ENCODE measurements at regions of chr1 and their contacts with region 1.

Region 1: DNA sequence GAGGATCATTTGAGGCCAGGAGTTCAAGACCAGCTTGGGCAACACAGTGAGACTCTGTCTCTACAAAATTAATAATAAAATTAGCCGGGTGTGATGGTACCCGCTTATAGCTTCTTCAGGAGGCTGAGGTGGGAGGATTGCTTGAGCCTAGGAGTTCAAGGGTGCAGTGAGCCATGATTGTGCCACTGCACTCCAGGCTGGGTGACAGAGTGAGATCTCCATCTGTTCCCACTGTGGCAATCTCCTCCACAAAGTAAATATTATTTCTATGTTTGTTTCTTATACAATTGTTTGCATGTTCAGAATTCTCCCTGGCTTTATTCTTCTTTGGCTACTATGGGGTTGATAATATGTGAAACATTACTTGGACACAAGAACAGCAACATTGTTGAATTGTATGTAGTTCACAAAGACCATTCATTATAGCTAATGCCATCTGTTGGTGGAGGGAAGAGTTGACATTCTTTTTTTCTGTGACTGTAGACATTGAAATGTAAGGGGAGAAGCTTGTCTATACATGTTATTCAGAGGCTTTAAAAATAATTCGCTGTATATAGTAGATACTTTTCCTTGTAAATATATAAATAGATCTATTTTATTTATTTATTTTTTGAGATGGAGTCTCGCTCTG is 47.8 kb upstream of the SRSF10 start:
- DNase-seq: no peak
- ATAC-seq: peak; percentile 80
- H3K4me3 ChIP-seq: no peak overlapping the region
- H3K27ac ChIP-seq: no peak overlapping the region
- H3K4me1 ChIP-seq: no peaks in the 10 kb centered on the region
- H3K27me3 ChIP-seq: no peaks in the 10 kb centered on the region

Region 2: DNA sequence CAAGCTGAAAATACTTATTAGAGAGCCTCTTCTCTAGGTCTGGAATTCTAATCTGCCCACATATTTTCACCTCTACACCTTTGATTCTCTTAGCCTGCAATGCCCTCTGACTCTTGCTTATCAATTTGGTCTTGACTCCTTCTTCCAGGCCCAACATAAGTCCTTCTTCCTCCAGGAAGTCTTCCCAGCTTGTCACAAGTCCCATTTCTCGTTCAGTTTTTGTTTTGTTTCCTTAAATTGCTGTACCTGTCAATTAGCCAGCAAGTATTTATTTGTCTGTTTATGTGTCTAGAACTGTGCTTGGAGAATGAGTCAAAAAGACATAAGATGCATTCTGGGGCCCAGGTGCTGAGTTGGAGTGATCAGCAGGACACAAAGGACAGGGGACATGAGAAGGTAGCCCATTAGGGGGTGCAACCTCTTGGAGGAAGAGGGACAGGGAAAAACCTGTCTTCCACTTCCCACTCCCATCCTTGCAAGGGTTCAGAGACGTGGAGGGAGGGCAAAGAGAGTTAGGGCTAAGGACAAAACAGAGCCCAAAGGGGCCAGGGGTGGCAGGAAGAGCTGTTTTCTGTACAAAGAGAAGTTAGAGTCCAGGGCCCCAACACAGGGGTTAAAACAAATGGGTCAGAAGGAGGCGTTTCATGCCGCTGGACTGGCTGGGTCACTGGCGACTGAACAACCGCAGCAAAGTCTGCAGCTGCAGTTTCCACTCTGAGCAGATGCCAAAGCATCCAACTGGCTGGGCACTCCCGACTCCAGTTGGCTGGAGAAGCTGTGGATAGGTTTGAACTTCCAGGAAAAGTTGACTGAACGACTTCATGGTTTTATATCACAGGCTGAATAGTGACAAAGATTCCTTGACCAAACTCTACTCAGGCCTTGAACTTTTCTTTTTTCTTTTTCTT is 104.1 kb before region 1 on chr1:
- intact Hi-C with region 1: loop called in 1 of 2 experiments (anchors 5 kb)
- DNase-seq: peak; percentile 78 to 80
- ATAC-seq: peak; percentile 54
- H3K4me3 ChIP-seq: no peak overlapping the region
- H3K27ac ChIP-seq: peak overlapping the region; percentile 9 to 14
- H3K4me1 ChIP-seq: no peaks in the 10 kb centered on the region
- H3K27me3 ChIP-seq: no peaks in the 10 kb centered on the region

Region 3: GRCh38 chr1:23959041-23959460 is 68.9 kb before region 1 on chr1:
- intact Hi-C with region 1: loop called in 1 of 2 experiments (anchors 5 kb)
- DNase-seq: peak; percentile 92 to 93
- ATAC-seq: peak; percentile 84
- H3K4me3 ChIP-seq: peak overlapping the region; percentile 35 to 45
- H3K27ac ChIP-seq: peak overlapping the region; percentile 39 to 92
- H3K4me1 ChIP-seq: no peaks in the 10 kb centered on the region
- H3K27me3 ChIP-seq: no peaks in the 10 kb centered on the region

Region 4: DNA sequence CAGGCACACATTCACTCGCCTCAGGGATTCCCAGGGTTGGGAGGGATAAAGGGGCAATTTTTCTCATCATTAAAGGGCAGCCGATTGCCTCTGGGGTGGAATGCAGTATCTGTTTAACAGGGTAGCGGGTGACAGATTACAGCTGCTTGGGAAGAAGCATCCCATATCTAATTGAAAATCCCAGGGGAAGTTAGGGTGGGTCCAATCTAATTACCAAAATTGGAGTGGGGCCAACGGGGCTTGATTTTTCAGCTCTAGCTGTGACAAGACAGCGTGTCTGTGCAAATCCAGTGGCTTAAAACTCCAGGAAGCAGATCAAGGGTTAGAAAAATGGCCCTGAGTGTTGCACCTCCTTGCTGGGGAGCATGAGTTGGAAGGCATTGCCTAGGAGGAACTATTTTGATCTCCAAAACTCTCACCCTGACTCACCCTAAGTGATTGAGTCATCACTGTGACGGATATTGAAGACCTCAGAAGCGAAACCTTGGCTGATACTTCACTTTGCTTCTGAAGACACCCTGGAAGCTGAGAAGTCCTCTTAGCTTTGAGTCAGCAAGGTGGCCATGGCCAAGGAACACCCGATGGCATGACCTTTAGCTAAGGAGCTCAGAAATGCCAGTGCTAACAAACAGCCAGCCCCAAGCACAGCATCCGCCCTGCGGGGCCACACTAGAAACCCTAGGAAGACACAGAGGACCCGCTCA is 337.2 kb after region 1 on chr1:
- intact Hi-C with region 1: no loop called
- DNase-seq: no peak
- ATAC-seq: no peak
- H3K4me3 ChIP-seq: no peak overlapping the region
- H3K27ac ChIP-seq: no peak overlapping the region
- H3K4me1 ChIP-seq: no peaks in the 10 kb centered on the region
- H3K27me3 ChIP-seq: no peaks in the 10 kb centered on the region

Measured in aorta (tissue), 5 donors.